Psoas muscle (tissue), 8 donors: ENCODE measurements at regions of chr6 and their contacts with region 1.

Region 1: DNA sequence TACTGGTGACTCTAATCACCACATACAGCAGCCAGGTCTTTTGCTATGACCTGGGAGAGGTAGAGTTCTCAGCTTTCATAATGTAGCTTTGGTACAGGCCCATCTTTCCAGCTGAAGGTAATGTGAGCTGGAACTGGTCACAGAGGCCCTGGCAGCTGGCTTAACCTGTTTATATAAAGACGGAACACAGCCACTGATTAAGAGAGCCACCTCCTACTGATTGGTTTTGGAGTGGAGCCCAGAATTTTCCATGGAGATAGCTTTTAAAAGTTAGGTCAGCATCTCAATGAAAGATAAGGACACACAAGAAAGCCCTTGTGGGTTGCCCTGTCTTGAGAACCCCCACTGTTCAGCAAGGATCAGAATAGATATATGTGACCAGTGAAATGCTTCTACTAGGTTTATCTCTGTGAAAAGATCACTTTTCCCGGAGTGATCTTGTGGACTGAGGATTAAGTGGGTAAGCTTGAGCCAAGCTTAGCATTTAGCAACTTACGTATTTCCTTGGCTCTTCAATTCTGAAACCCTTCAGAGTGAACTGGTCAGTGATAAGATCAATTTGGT is 213.7 kb upstream of the CITED2 start:
- DNase-seq: no peak
- ATAC-seq: peak; percentile 68 to 84 (median 78)
- H3K4me3 ChIP-seq: no peak overlapping the region
- H3K27ac ChIP-seq: peak overlapping the region; percentile 83
- H3K4me1 ChIP-seq: peaks cover 50% of the 10 kb centered on the region
- H3K27me3 ChIP-seq: no peaks in the 10 kb centered on the region
- CTCF ChIP-seq: no peak

Region 2: DNA sequence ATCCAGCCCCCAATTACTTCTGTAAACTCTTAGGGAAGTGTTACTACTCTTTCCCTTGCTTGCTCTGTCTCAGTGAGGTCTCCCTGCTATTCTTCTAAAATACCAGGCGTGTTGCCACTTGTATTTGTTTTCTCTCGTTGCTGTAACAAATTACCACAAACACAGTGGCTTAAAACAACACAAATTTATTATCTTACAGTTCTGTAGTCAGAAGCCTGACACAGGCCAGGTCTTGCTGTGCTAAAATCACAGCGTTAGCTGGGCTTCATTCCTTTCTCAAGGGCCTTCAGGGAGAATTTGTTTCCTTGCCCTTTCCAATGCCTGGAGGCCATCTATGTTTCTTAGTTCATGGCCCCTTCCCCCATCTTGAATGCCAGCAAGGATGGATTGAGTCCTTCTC is 393.4 kb before region 1 on chr6:
- intact Hi-C with region 1: no loop called
- DNase-seq: no peak
- ATAC-seq: no peak
- H3K4me3 ChIP-seq: no peak overlapping the region
- H3K27ac ChIP-seq: no peak overlapping the region
- H3K4me1 ChIP-seq: no peaks in the 10 kb centered on the region
- H3K27me3 ChIP-seq: no peaks in the 10 kb centered on the region
- CTCF ChIP-seq: no peak

Region 3: GRCh38 chr6:139540276-139540675 is 47.9 kb before region 1 on chr6:
- intact Hi-C with region 1: loop called in 1 of 2 experiments (anchors 5 kb)
- DNase-seq: peak; percentile 29 to 67
- ATAC-seq: peak; percentile 33 to 55 (median 36)
- H3K4me3 ChIP-seq: peak overlapping the region; percentile 15
- H3K27ac ChIP-seq: peak overlapping the region; percentile 86
- H3K4me1 ChIP-seq: peaks cover 9% of the 10 kb centered on the region
- H3K27me3 ChIP-seq: no peaks in the 10 kb centered on the region
- CTCF ChIP-seq: no peak

Region 4: DNA sequence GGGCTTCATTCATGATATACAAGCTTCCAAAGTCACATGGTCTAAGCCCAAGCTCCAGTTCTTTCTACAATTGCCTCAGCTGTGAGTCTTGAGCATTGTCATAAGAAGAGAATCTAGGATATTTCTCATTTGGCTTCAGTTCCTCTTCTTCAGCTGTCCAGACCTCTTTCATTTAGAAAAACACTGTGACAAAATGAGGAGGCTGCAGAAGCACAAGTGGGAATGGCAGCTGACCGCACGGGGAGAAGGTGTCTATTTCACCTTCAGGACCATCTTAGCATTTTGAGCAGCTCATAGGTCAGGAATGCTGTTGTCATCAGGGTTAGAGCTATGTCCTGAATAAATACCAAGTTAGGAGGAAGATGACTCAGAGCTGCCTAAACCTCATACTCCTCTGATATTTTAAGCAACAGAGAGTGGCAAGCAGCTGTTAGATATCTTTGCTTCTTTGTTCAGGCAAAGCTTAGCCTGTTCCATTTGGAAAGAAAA is 176.4 kb after region 1 on chr6:
- intact Hi-C with region 1: loop called in 1 of 2 experiments (anchors 5 kb)
- DNase-seq: peak; percentile 54 to 67
- ATAC-seq: peak; percentile 94 to 98 (median 96)
- H3K4me3 ChIP-seq: peak overlapping the region; percentile 9
- H3K27ac ChIP-seq: peak overlapping the region; percentile 96
- H3K4me1 ChIP-seq: peaks cover 57% of the 10 kb centered on the region
- H3K27me3 ChIP-seq: no peaks in the 10 kb centered on the region
- CTCF ChIP-seq: no peak

Region 5: DNA sequence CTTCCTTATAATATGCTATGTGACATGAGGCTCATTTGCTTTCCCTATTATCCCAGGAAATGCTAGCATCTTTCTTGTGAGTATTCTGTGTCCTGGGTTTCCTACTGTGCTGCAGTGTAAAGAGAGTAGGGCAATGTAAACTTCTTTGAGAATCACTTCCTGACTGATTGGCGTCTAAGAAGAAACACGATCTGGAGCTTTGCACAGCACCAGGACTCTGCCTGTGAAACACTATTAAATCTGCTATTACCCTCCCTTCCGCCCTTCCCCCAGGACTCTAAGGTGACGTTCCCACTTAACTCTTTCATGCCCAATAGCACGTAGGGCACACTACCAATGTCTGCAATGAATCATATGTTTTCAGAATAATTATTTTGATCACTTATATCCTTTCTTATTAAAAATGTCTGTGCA is 393.6 kb after region 1 on chr6:
- intact Hi-C with region 1: loop called in 1 of 2 experiments (anchors 10 kb)
- DNase-seq: no peak
- ATAC-seq: peak; percentile 44 to 74 (median 70)
- H3K4me3 ChIP-seq: no peak overlapping the region
- H3K27ac ChIP-seq: peak overlapping the region; percentile 57
- H3K4me1 ChIP-seq: peaks cover 27% of the 10 kb centered on the region
- H3K27me3 ChIP-seq: no peaks in the 10 kb centered on the region
- CTCF ChIP-seq: no peak